Heart left ventricle (tissue), 16 donors: ENCODE measurements at regions of chr5 and their contacts with region 1.

Region 1: GRCh38 chr5:112560371-112560770 is 141.3 kb upstream of the EPB41L4A start:
- DNase-seq: no peak
- ATAC-seq: no peak
- H3K4me3 ChIP-seq: no peak overlapping the region
- H3K27ac ChIP-seq: no peak overlapping the region
- H3K4me1 ChIP-seq: peaks cover 0 to 2% (median 0%) of the 10 kb centered on the region in 12 donors
- H3K27me3 ChIP-seq: no peaks in the 10 kb centered on the region
- CTCF ChIP-seq: no peak
- POLR2A ChIP-seq: no peak

Region 2: GRCh38 chr5:112671687-112672086 is 111.3 kb after region 1 on chr5:
- intact Hi-C with region 1: no loop called
- DNase-seq: no peak
- ATAC-seq: no peak
- H3K4me3 ChIP-seq: no peak overlapping the region
- H3K27ac ChIP-seq: no peak overlapping the region
- H3K4me1 ChIP-seq: no peaks in the 10 kb centered on the region
- H3K27me3 ChIP-seq: no peaks in the 10 kb centered on the region
- CTCF ChIP-seq: no peak
- POLR2A ChIP-seq: no peak

Region 3: DNA sequence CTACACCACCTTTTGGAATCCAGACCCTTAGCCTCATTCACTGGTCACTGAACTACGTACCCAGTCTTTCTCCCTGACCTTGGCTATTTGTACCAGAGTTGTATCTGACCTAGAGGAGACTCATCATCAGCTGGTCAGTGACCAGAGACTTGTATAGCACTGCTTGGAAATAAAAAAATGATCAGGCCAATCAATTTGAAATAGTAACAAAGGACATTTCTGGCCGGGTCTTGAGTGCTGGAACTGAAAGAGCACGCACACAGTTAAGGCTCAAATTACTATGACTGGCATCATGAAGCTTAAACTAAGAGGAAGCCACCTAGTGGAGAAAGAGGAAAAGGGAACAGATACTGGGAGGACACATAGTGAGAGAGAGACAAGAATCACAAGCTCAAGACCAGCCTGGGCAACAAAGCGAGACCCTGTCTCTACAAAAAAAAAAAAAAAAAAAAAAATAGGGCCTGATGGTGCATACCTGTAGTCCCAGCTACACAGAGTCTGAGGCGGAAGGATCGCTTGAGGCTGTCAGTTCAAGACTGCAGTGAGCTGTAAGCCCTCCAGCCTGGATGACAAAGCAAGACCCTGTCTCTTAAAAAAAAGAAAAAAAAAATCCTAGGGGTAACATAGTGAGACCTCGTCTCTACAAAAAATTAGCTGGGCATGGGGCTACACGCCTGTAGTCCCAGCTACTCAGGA is 287.9 kb after region 1 on chr5:
- intact Hi-C with region 1: loop called in 3 of 10 experiments (anchors 5 to 10 kb)
- DNase-seq: no peak
- ATAC-seq: peak; percentile 74 to 94 (median 90)
- H3K4me3 ChIP-seq: no peak overlapping the region
- H3K27ac ChIP-seq: no peak overlapping the region
- H3K4me1 ChIP-seq: peaks cover 0 to 15% (median 0%) of the 10 kb centered on the region in 12 donors
- H3K27me3 ChIP-seq: no peaks in the 10 kb centered on the region
- CTCF ChIP-seq: peak; percentile 45 to 76 (median 59)
- POLR2A ChIP-seq: no peak

Region 4: DNA sequence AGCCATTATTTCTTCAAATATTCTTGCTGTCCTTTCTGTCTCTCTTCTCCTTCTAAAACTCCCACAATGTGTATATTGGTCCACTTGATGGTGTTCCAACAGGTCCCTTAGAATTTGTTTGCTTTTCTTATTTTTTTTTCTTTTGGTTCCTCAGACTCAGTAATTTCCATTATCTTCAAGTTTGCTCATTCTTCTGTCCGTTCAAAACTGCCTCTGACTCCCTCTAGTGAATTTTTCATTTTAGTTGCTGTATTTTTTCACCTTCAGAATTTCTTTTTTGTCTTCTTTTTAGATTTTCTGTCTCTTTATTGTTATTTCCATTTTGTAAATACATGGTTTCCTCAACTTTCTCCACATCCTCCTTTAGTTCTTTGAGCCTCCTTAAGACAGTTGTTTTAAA is 294.3 kb after region 1 on chr5:
- intact Hi-C with region 1: loop called in 3 of 10 experiments (anchors 5 to 10 kb)
- DNase-seq: no peak
- ATAC-seq: no peak
- H3K4me3 ChIP-seq: no peak overlapping the region
- H3K27ac ChIP-seq: no peak overlapping the region
- H3K4me1 ChIP-seq: no peaks in the 10 kb centered on the region
- H3K27me3 ChIP-seq: no peaks in the 10 kb centered on the region
- CTCF ChIP-seq: no peak
- POLR2A ChIP-seq: no peak